Caco-2 (cell line): ENCODE measurements at regions of chr2 and their contacts with region 1.

Region 1: DNA sequence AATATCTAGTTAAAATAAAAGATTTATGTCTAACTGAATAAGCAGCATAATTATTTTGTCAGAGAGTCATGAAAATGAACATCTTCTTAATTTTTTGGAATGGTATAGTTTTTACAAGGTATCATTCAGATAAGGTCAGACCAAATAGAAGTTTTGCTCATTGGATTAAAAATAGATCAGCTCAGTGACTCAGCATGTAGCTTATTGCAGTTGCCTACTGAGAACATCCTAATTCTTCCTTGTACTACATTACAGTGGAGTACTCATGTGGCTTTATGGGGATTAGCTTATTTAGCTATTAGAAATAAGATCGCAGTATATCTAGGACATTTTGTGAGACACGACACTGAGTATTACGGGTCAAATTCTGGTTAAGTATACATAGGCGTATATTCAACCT is 38.2 kb upstream of the PPM1B start:
- DNase-seq: no peak
- H3K4me3 ChIP-seq: no peak overlapping the region
- H3K4me3 Mint-ChIP-seq: no peak overlapping the region
- H3K27ac Mint-ChIP-seq: no peak overlapping the region
- H3K4me1 ChIP-seq: peaks cover 33% of the 10 kb centered on the region
- H3K4me1 Mint-ChIP-seq: peaks cover 7% of the 10 kb centered on the region
- H3K27me3 ChIP-seq: no peaks in the 10 kb centered on the region
- H3K27me3 Mint-ChIP-seq: no peaks in the 10 kb centered on the region
- CTCF ChIP-seq: no peak

Region 2: GRCh38 chr2:43751476-43751990 is 378.9 kb before region 1 on chr2:
- CTCF ChIA-PET with region 1: no interaction called
- POLR2A ChIA-PET with region 1: interaction called, 15 read pairs
- intact Hi-C with region 1: no loop called
- DNase-seq: no peak
- H3K4me3 ChIP-seq: no peak overlapping the region
- H3K4me3 Mint-ChIP-seq: no peak overlapping the region
- H3K27ac Mint-ChIP-seq: no peak overlapping the region
- H3K4me1 ChIP-seq: no peaks in the 10 kb centered on the region
- H3K4me1 Mint-ChIP-seq: no peaks in the 10 kb centered on the region
- H3K27me3 ChIP-seq: no peaks in the 10 kb centered on the region
- H3K27me3 Mint-ChIP-seq: no peaks in the 10 kb centered on the region
- CTCF ChIP-seq: no peak

Region 3: DNA sequence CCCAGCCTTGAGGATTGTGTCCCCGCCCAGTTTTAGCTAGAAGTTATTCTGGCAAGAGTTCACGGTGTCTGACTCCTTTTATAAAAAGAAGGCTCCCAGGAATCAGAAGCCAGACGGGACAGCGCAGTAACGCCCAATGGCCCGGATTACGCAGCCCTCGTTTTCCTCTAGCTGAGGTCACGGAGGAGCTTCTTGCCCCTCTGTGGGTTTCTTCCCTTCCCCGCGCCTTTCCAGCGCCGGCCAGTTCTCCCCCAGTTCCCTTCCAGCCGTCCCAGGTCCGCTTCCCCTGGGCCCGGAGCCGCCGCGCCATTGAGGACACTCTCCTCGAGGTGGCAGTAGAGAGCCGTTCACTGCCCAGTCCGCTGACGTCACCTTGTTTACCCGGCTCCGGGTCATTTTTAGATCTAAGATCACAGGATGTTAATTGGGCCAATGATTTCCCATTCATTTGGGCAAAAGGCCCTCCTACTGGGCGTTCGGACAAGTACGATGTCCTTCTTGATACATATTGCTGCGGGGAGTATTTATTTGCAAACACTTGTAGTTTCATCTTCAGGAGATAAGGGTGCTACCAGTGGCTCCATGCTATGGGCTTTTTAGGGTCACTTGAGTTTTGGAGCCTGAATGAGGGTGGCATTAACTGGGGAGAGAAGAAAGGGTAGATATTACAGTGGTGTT is 43.3 kb before region 1 on chr2:
- CTCF ChIA-PET with region 1: no interaction called
- POLR2A ChIA-PET with region 1: no interaction called
- intact Hi-C with region 1: no loop called
- DNase-seq: peak; percentile 83 to 93
- H3K4me3 ChIP-seq: peak overlapping the region; percentile 32
- H3K4me3 Mint-ChIP-seq: peak overlapping the region; percentile 73
- H3K27ac Mint-ChIP-seq: peak overlapping the region; percentile 80
- H3K4me1 ChIP-seq: peaks cover 30% of the 10 kb centered on the region
- H3K4me1 Mint-ChIP-seq: peaks cover 49% of the 10 kb centered on the region
- H3K27me3 ChIP-seq: no peaks in the 10 kb centered on the region
- H3K27me3 Mint-ChIP-seq: no peaks in the 10 kb centered on the region
- CTCF ChIP-seq: peak; percentile 94 to 96

Region 4: DNA sequence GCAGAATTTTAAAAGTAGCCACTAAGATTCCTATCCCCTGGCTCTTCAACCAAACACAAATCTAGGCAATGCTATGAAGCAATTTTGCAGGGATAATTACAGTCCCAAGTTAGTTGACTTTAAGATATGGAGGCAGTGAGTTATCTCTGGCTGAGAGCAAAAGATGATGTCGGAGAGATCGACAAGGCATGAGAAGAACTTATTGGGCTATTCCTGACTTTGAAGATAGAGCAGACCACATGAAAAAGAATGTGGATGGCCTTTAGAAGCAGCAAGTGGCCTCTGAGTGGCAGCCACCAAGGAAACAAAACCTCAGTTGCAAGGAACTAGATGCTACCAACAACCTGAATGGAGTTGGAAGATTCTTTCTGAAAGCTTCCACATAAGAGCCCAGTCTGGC is 20.0 kb before region 1 on chr2:
- CTCF ChIA-PET with region 1: no interaction called
- POLR2A ChIA-PET with region 1: no interaction called
- intact Hi-C with region 1: loop called (anchors 2 kb)
- DNase-seq: peak; percentile 63 to 68
- H3K4me3 ChIP-seq: no peak overlapping the region
- H3K4me3 Mint-ChIP-seq: peak overlapping the region; percentile 18
- H3K27ac Mint-ChIP-seq: peak overlapping the region; percentile 73
- H3K4me1 ChIP-seq: peaks cover 43% of the 10 kb centered on the region
- H3K4me1 Mint-ChIP-seq: peaks cover 19% of the 10 kb centered on the region
- H3K27me3 ChIP-seq: no peaks in the 10 kb centered on the region
- H3K27me3 Mint-ChIP-seq: no peaks in the 10 kb centered on the region
- CTCF ChIP-seq: no peak

Region 5: DNA sequence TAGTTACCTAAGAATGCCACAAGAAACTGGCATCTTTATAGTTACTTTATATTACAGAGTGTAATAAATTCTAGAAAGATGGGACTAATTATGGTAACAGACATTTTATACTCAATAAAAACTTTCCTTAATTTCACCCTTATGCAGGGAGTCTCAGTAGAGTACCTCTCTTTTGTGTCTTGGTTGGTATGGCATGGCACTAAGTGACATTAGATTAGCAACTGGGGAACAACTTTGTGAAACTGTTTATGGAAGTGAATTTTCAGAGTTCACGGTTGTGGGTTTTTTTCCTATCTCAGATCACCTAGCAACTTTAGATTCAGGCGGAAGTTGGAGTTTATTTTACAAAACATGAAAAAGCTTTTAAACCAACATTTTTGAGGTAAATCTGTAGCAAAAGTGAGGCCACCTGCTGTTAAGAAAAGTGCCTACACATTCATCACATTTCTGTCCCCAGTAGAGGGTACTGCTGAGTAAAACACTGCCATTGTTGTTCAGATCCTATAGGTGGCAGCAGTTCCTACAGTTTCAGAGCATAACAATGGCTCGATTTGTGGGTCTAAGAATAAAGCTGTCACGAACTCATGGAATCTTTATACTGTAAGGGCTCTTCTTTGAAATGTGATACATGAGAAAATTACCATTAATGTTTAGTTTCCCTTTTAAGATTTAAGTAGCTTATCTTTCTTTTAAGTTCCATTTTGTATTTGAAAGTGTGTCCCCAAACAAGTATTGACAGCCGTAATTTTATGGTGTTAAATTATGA is 348.9 kb after region 1 on chr2:
- CTCF ChIA-PET with region 1: no interaction called
- POLR2A ChIA-PET with region 1: no interaction called
- intact Hi-C with region 1: no loop called
- DNase-seq: peak; percentile 54 to 79
- H3K4me3 ChIP-seq: no peak overlapping the region
- H3K4me3 Mint-ChIP-seq: no peak overlapping the region
- H3K27ac Mint-ChIP-seq: no peak overlapping the region
- H3K4me1 ChIP-seq: no peaks in the 10 kb centered on the region
- H3K4me1 Mint-ChIP-seq: no peaks in the 10 kb centered on the region
- H3K27me3 ChIP-seq: no peaks in the 10 kb centered on the region
- H3K27me3 Mint-ChIP-seq: no peaks in the 10 kb centered on the region
- CTCF ChIP-seq: peak; percentile 99 to 100